ENCODE measurements at regions of chr14 and their contacts with region 1.

Region 1: GRCh38 chr14:75560962-75561432 is 17.4 kb upstream of the FLVCR2 start:
- DNase-seq: peak; percentile 71
- ATAC-seq: no peak
- H3K4me3 Mint-ChIP-seq: peak overlapping the region; percentile 13
- H3K27ac Mint-ChIP-seq: peak overlapping the region; percentile 88
- H3K4me1 Mint-ChIP-seq: peaks cover 82% of the 10 kb centered on the region
- H3K27me3 Mint-ChIP-seq: no peaks in the 10 kb centered on the region

Region 2: DNA sequence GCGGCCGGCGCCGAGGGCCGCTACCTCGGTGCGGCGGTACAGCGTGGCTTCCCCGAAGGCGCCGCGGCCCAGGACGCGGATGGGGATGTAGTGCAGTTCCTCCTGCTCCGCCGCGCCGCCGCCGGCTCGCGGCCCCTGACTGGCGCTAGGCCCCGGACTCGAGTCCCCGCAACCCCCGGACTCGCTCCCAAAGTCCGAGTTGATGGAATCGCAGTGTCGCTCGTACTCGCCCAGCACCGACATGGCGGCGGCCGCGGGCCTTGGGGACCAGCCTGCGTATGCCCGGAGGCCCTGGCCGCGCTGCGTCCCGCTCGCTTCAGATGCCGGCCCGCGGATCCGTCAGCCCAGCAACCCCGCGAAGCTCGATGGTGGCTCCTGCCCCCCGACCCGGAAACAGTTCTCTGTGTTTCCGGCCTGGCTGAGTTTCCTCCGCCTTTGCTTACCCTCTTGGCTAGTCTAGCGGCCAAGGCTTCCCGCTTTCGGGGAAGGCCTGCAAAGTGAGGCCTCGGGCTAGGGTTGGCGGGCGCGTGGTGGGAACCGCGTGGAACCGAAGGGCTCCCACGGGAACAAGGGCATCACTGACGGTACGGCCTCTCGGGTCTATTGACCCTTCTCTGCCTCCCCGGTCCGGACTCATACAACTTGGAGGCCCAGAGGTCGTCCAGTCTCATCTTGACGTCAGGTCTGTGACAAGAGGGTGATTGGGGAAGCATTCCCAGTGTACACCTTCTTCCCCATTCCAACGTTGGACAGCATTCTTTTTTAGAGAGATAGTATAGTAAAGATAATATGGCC is 434.1 kb before region 1 on chr14 and contains the start of gene NEK9:
- CTCF ChIA-PET with region 1: no interaction called
- POLR2A ChIA-PET with region 1: interaction called, 3 read pairs
- intact Hi-C with region 1: loop called in 1 of 2 experiments (anchors 5 kb)
- DNase-seq: peak; percentile 94
- ATAC-seq: peak; percentile 90
- H3K4me3 Mint-ChIP-seq: peak within 1 kb of the TSS; percentile 97
- H3K27ac Mint-ChIP-seq: peak within 1 kb of the TSS; percentile 98
- H3K4me1 Mint-ChIP-seq: peaks cover 41% of the 10 kb centered on the region
- H3K27me3 Mint-ChIP-seq: no peaks in the 10 kb centered on the region
- total RNA-seq, gene NEK9: 45.2 to 58.7 TPM

Region 3: GRCh38 chr14:75487155-75487671 is 73.8 kb before region 1 on chr14:
- CTCF ChIA-PET with region 1: interaction called, 11 read pairs
- POLR2A ChIA-PET with region 1: no interaction called
- intact Hi-C with region 1: loop called (anchors 1 to 5 kb)
- DNase-seq: peak; percentile 24
- ATAC-seq: peak; percentile 89
- H3K4me3 Mint-ChIP-seq: no peak overlapping the region
- H3K27ac Mint-ChIP-seq: no peak overlapping the region
- H3K4me1 Mint-ChIP-seq: peaks cover 32% of the 10 kb centered on the region
- H3K27me3 Mint-ChIP-seq: no peaks in the 10 kb centered on the region

Region 4: DNA sequence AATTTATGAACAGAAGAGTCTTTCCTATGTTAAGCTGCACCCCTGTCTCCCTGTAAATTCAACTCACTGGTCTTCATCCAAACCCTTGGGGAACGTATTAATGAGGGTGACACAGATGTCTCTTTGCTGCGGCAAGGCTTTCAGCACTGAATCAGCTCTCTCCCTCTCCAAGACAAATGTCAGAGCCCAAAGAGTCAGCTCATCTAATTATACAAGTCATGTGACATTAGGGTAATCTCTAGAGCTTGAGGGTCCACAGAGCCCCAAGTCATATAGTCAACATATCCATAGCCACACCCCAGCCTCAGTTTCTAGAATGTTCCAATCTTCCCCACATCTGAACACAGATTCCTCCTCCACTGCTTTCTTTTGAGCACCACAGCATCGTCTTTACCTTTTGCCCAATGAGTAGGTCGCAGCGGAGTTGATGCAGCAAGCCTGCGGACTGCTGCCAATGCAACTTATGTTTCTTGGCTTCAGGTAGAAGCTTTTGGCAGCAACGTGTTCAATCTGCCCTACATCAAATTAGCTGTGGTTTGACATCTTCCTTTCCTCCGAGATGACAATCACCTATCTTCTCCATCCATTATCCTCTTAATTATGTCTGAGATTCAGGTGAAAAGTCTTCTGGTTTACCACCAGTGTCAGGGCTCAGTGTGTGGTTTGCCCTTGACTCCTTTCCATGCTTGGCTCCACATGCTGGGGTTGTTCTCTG is 33.4 kb before region 1 on chr14:
- CTCF ChIA-PET with region 1: interaction called, 25 read pairs
- POLR2A ChIA-PET with region 1: interaction called, 19 read pairs
- intact Hi-C with region 1: loop called (anchors 1 kb)
- DNase-seq: no peak
- ATAC-seq: no peak
- H3K4me3 Mint-ChIP-seq: peak overlapping the region; percentile 64
- H3K27ac Mint-ChIP-seq: peak overlapping the region; percentile 85
- H3K4me1 Mint-ChIP-seq: peaks cover 73% of the 10 kb centered on the region
- H3K27me3 Mint-ChIP-seq: no peaks in the 10 kb centered on the region

Region 5: GRCh38 chr14:75577729-75578101 is 16.7 kb after region 1 on chr14:
- CTCF ChIA-PET with region 1: interaction called, 29 read pairs
- POLR2A ChIA-PET with region 1: interaction called, 7 read pairs
- intact Hi-C with region 1: no loop called
- DNase-seq: peak; percentile 89
- ATAC-seq: peak; percentile 90
- H3K4me3 Mint-ChIP-seq: peak overlapping the region; percentile 74
- H3K27ac Mint-ChIP-seq: peak overlapping the region; percentile 74
- H3K4me1 Mint-ChIP-seq: peaks cover 22% of the 10 kb centered on the region
- H3K27me3 Mint-ChIP-seq: no peaks in the 10 kb centered on the region

Region 6: GRCh38 chr14:75667099-75667765 is 106.2 kb after region 1 on chr14:
- CTCF ChIA-PET with region 1: no interaction called
- POLR2A ChIA-PET with region 1: no interaction called
- intact Hi-C with region 1: no loop called
- DNase-seq: no peak
- ATAC-seq: no peak
- H3K4me3 Mint-ChIP-seq: no peak overlapping the region
- H3K27ac Mint-ChIP-seq: no peak overlapping the region
- H3K4me1 Mint-ChIP-seq: peaks cover 8% of the 10 kb centered on the region
- H3K27me3 Mint-ChIP-seq: no peaks in the 10 kb centered on the region

Region 7: GRCh38 chr14:75685910-75686309 is 124.9 kb after region 1 on chr14:
- CTCF ChIA-PET with region 1: no interaction called
- POLR2A ChIA-PET with region 1: no interaction called
- intact Hi-C with region 1: no loop called
- DNase-seq: no peak
- ATAC-seq: no peak
- H3K4me3 Mint-ChIP-seq: no peak overlapping the region
- H3K27ac Mint-ChIP-seq: no peak overlapping the region
- H3K4me1 Mint-ChIP-seq: peaks cover 10% of the 10 kb centered on the region
- H3K27me3 Mint-ChIP-seq: no peaks in the 10 kb centered on the region

Measured in activated CD4-positive, alpha-beta T cell treated with anti-CD3 and anti-CD28 coated beads for 36 hours (primary cell).